Mammary epithelial cell (primary cell): ENCODE measurements at regions of chr7 and their contacts with region 1.

Region 1: GRCh38 chr7:28615091-28615490 is 202.8 kb downstream of the CREB5 start:
- DNase-seq: no peak
- H3K4me3 ChIP-seq: no peak overlapping the region
- H3K27ac ChIP-seq: no peak overlapping the region
- H3K4me1 ChIP-seq: peaks cover 20% of the 10 kb centered on the region
- H3K27me3 ChIP-seq: no peaks in the 10 kb centered on the region
- CTCF ChIP-seq: no peak

Region 2: DNA sequence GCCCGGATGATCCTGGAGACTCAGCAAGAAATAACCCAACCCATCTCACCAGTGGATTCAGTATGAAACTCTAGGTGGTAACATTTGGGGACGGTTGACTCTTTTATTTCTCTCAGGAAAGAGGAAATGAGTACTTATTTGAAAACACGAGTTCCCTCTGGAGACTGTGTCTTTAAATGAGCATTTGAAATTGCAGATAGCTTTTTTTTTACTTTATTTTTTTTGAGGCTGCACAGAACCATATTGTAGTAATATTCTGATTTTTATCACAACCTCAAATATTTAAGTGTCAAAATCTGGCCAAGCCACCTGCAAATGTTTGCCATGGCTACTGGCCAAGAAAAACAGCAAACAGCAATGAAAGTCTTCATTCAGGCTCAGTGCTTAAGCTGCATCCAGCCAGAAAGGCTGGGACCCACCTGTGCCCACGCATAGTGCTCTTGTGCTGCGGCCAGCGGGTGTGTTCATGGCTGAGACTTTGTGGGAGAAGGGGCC is 42.0 kb before region 1 on chr7:
- CTCF ChIA-PET with region 1: no interaction called
- dilution Hi-C with region 1: no loop called
- in situ Hi-C with region 1: no loop called
- intact Hi-C with region 1: loop called (anchors 2 kb)
- DNase-seq: peak; percentile 82
- H3K4me3 ChIP-seq: no peak overlapping the region
- H3K27ac ChIP-seq: no peak overlapping the region
- H3K4me1 ChIP-seq: peaks cover 32% of the 10 kb centered on the region
- H3K27me3 ChIP-seq: peaks cover 6% of the 10 kb centered on the region
- CTCF ChIP-seq: no peak

Region 3: DNA sequence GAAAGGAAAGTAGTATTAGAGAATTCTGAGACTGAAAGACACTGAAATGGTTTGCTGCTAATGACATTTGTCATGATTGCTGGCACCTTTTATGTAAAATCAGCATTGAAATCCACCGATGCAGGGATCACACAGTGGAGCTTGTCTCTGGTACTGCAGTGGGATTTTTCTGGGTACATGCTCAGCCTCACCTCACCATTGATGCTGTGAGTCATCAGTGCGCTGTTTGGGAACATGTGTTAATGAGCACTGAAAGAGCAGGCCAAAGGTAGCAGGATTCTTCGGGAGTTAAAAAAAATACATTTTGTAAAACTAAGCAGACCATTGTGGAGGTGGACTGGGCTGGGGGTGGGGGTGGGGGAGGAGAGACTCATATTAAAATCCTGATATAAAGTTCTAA is 27.9 kb before region 1 on chr7:
- CTCF ChIA-PET with region 1: no interaction called
- dilution Hi-C with region 1: no loop called
- in situ Hi-C with region 1: no loop called
- intact Hi-C with region 1: no loop called
- DNase-seq: peak; percentile 86
- H3K4me3 ChIP-seq: no peak overlapping the region
- H3K27ac ChIP-seq: no peak overlapping the region
- H3K4me1 ChIP-seq: peaks cover 19% of the 10 kb centered on the region
- H3K27me3 ChIP-seq: peaks cover 19% of the 10 kb centered on the region
- CTCF ChIP-seq: no peak

Region 4: DNA sequence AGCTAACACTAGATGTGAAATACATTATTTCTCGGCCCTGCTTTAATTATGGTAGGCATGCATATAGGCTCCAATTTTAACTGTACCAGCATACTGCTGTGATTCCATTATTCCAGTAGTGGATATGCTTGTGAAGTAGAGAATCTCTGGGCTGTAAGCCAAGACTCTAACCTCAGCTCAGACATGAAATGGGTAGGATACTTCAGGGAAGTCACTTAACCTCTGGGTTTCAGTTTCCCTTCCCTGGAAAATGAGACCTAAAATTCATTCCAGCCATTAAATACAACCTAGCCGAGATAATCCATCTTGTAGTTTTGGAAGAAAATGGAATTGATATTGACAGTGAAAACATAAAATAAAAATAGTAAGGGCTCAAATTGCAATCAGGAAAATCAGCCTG is 402.6 kb after region 1 on chr7:
- CTCF ChIA-PET with region 1: no interaction called
- dilution Hi-C with region 1: no loop called
- in situ Hi-C with region 1: no loop called
- intact Hi-C with region 1: no loop called
- DNase-seq: no peak
- H3K4me3 ChIP-seq: no peak overlapping the region
- H3K27ac ChIP-seq: no peak overlapping the region
- H3K4me1 ChIP-seq: no peaks in the 10 kb centered on the region
- H3K27me3 ChIP-seq: no peaks in the 10 kb centered on the region
- CTCF ChIP-seq: no peak